GM13977 (cell line): ENCODE measurements at regions of chr6 and their contacts with region 1.

Region 1: GRCh38 chr6:106444777-106445507 is 84.4 kb downstream of the CRYBG1 start:
- DNase-seq: peak; percentile 72
- CTCF ChIP-seq: peak; percentile 68

Region 2: DNA sequence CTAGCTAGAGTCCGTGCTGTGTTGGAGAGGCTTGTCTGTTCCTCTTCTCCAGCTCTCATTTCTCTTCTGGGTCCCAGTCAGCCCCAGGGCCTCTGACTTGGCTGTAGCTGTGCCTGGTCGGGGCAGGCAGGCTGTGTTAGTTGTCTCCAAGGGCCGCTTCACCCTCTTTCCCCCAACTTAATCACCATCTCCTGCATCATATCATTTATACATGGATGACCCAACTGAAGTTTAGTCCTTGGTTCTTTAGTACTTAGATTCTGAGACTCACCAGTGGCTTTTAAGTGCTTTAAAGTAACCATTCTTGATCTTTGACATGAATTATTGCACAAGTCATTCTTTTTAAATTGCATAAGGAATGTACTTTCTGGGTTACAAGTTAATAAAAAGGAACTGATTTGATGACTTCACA is 57.0 kb after region 1 on chr6:
- in situ Hi-C with region 1: no loop called
- DNase-seq: no peak
- CTCF ChIP-seq: no peak

Region 3: GRCh38 chr6:106568530-106568929 is 123.6 kb after region 1 on chr6:
- in situ Hi-C with region 1: loop called (anchors 5 kb)
- DNase-seq: no peak
- CTCF ChIP-seq: no peak